ENCODE measurements at regions of chr20 and their contacts with region 1.

Region 1: DNA sequence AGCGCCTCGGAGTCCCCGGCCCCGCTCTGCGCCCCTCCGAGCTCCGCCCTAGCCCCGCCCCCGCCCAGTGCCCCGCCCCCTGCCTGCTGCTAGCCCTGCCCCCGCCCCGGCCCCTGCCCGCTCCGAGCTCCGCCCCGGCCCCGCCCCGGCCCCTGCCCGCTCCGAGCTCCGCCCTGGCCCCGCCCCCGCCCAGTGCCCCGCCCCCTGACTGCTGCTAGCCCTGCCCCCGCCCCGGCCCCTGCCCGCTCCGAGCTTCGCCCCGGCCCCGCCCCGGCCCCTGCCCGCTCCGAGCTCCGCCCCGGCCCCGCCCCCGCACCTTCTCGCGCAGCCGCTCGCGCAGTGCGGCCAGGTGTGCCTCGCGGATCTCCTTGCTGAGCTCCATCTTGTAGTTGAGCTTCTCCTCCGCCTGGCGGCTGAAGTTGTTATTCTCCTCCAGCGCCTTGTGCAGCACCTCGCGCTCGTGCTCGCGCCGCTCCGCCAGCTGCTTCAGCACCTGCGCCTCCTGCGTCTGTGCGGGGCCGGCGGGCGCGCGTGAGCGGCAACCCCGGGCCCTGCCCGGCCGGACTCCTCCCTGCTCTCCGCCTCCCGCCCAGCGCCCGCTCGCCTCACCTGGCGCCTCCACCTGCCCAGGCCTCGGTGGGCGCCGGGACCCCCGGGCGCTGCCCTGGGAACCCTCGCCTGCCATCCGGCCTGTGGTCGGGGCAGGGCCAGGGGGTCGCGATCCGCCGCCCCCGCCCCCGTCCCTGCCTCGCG is 11.3 kb downstream of the STMN3 start:
- DNase-seq: peak; percentile 97
- H3K4me3 Mint-ChIP-seq: peak overlapping the region; percentile 69
- H3K27ac Mint-ChIP-seq: peak overlapping the region; percentile 77
- H3K4me1 Mint-ChIP-seq: peaks cover 26% of the 10 kb centered on the region
- H3K27me3 Mint-ChIP-seq: no peaks in the 10 kb centered on the region

Region 2: DNA sequence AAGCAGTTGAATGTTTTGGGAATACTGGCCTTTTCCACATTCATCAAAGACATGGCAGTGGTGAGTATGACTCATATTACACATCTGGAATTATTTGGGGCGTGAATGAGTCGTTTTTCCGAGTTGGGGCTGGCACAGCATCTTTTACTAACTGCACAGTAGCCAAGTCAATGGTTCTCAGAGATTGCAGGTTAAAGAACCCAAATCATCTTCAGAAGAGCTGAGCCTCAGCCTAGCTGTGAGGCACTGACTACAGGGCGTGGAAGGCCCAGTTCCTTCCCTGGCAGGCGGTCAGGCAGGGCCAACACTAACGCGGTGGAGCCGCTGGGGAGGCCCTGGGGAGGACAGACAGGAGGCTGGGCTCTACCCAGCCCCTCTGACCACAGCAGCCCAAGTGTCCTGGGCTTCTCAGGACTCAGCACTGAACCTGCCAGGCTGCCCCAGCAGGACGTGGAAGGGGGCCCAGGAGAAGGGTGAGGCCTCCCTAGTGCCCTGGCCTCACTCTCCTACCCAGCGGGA is 47.9 kb before region 1 on chr20:
- CTCF ChIA-PET with region 1: no interaction called
- POLR2A ChIA-PET with region 1: no interaction called
- intact Hi-C with region 1: no loop called
- DNase-seq: no peak
- H3K4me3 Mint-ChIP-seq: no peak overlapping the region
- H3K27ac Mint-ChIP-seq: no peak overlapping the region
- H3K4me1 Mint-ChIP-seq: no peaks in the 10 kb centered on the region
- H3K27me3 Mint-ChIP-seq: no peaks in the 10 kb centered on the region

Region 3: GRCh38 chr20:63627129-63627750 is 14.7 kb before region 1 on chr20:
- CTCF ChIA-PET with region 1: interaction called, 18 read pairs
- POLR2A ChIA-PET with region 1: interaction called, 30 read pairs
- intact Hi-C with region 1: loop called (anchors 1 kb)
- DNase-seq: peak; percentile 96
- H3K4me3 Mint-ChIP-seq: peak overlapping the region; percentile 98
- H3K27ac Mint-ChIP-seq: peak overlapping the region; percentile 97
- H3K4me1 Mint-ChIP-seq: peaks cover 36% of the 10 kb centered on the region
- H3K27me3 Mint-ChIP-seq: no peaks in the 10 kb centered on the region

Region 4: GRCh38 chr20:63657937-63658748 is 16.2 kb after region 1 on chr20 and contains the start of gene RTEL1:
- CTCF ChIA-PET with region 1: interaction called, 11 read pairs
- POLR2A ChIA-PET with region 1: interaction called, 10 read pairs
- intact Hi-C with region 1: no loop called
- DNase-seq: peak; percentile 92
- H3K4me3 Mint-ChIP-seq: peak within 1 kb of the TSS; percentile 92
- H3K27ac Mint-ChIP-seq: peak within 1 kb of the TSS; percentile 93
- H3K4me1 Mint-ChIP-seq: peaks cover 29% of the 10 kb centered on the region
- H3K27me3 Mint-ChIP-seq: no peaks in the 10 kb centered on the region
- total RNA-seq, gene RTEL1: 38.0 to 38.3 TPM

Region 5: GRCh38 chr20:63908008-63908624 is 266.1 kb after region 1 on chr20:
- CTCF ChIA-PET with region 1: no interaction called
- POLR2A ChIA-PET with region 1: no interaction called
- intact Hi-C with region 1: no loop called
- DNase-seq: no peak
- H3K4me3 Mint-ChIP-seq: no peak overlapping the region
- H3K27ac Mint-ChIP-seq: no peak overlapping the region
- H3K4me1 Mint-ChIP-seq: peaks cover 39% of the 10 kb centered on the region
- H3K27me3 Mint-ChIP-seq: no peaks in the 10 kb centered on the region

Measured in activated CD4-positive, alpha-beta memory T cell treated with anti-CD3 and anti-CD28 coated beads for 36 hours (primary cell).